AG04450 (cell line): ENCODE measurements at regions of chr15 and their contacts with region 1.

Region 1: DNA sequence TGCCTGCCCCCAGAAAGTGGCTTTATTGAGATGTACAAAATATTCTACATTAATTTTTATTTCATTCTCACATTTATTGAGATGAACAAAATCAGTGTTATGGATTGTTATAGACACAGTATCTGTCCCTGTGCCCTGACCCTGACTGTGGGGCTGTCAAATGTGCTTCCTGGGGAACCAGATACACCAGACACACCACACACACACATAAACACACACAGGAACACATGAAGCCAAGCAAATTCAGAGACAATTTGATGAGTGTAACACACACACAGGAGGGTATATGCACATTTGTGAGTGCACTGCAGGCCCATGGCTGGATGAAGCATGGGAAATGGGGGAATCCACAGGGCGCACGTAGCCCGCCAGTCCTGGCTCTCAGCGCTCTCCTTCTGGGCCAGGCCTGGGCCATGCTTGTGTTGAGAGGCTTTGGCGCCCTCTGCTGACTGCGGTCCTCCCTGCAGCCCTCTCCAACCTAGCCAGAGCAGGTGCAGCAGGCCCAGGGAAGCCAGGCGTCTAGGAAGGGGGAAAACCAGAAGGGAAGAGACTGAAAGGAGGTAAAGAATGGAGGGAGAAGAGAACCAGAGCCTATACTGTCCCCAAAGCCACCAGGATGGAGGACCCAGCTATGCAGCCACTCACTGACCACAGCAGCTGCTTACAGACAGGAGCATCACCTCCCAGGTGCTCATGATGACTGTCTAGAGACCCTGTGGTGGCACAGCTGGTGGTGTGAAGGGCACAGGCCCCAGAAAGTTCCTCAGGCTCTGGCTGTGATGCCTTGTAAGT is 18.0 kb upstream of the LOXL1 start:
- DNase-seq: no peak
- H3K4me3 ChIP-seq: no peak overlapping the region
- H3K27ac ChIP-seq: no peak overlapping the region
- H3K27me3 ChIP-seq: no peaks in the 10 kb centered on the region
- CTCF ChIP-seq: peak; percentile 97

Region 2: GRCh38 chr15:73897441-73898261 is 10.6 kb before region 1 on chr15:
- CTCF ChIA-PET with region 1: interaction called, 35 read pairs
- POLR2A ChIA-PET with region 1: no interaction called
- DNase-seq: peak; percentile 76
- H3K4me3 ChIP-seq: no peak overlapping the region
- H3K27ac ChIP-seq: peak overlapping the region; percentile 75
- H3K27me3 ChIP-seq: peaks cover 5% of the 10 kb centered on the region
- CTCF ChIP-seq: peak; percentile 94

Region 3: GRCh38 chr15:73918749-73919148 is 10.5 kb after region 1 on chr15:
- CTCF ChIA-PET with region 1: interaction called, 12 read pairs
- POLR2A ChIA-PET with region 1: interaction called, 4 read pairs
- DNase-seq: no peak
- H3K4me3 ChIP-seq: no peak overlapping the region
- H3K27ac ChIP-seq: no peak overlapping the region
- H3K27me3 ChIP-seq: no peaks in the 10 kb centered on the region
- CTCF ChIP-seq: no peak